Esophagus squamous epithelium (tissue), 5 donors: ENCODE measurements at regions of chr21 and their contacts with region 1.

Region 1: DNA sequence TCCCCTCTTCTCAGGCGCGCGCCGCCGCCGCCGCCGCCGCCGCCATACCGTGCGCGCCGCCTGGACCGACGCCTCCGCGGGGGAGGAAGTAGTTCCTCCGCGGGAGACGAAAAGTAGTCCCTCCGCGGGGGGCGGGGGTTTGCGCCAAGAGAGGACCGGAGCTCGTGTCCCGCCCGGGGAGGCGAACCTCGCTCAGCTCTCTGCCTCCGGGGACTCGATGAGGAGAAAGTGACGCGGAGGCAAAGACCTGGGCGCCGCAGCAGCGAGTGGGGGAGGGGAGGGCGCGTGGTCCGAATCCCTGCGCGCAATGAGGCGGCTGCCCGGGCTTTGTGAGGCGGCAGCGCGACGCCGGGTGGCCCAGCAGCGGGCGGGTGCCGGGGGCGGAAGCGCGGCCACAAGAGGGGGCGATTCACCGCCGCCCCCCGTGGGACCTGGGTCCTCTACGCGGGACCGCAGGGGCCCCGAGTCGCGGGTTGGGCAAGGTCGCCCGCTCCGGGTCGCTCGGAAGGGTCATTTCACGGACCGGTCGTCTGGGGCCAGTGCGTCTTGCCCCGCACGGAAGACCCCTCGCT is at the start of gene BRWD1:
- DNase-seq: peak; percentile 20
- H3K4me3 ChIP-seq: peak within 1 kb of the TSS; percentile 72 to 96 (median 85)
- H3K27ac ChIP-seq: peak within 1 kb of the TSS; percentile 98 to 99 (median 98)
- H3K4me1 ChIP-seq: peaks cover 0 to 44% (median 12%) of the 10 kb centered on the region in 3 donors
- H3K27me3 ChIP-seq: no peaks in the 10 kb centered on the region
- CTCF ChIP-seq: peak in 4 of 6 experiments; percentile 16 to 42 (median 22)
- POLR2A ChIP-seq: peak in 3 of 4 donors; percentile 6 to 76 (median 71)
- total RNA-seq, gene BRWD1: 22.1 to 57.2 (median 26.0) TPM

Region 2: GRCh38 chr21:39238275-39238674 is 75.4 kb before region 1 on chr21:
- intact Hi-C with region 1: no loop called
- DNase-seq: no peak
- H3K4me3 ChIP-seq: no peak overlapping the region
- H3K27ac ChIP-seq: no peak overlapping the region
- H3K4me1 ChIP-seq: no peaks in the 10 kb centered on the region
- H3K27me3 ChIP-seq: no peaks in the 10 kb centered on the region
- CTCF ChIP-seq: no peak
- POLR2A ChIP-seq: no peak

Region 3: DNA sequence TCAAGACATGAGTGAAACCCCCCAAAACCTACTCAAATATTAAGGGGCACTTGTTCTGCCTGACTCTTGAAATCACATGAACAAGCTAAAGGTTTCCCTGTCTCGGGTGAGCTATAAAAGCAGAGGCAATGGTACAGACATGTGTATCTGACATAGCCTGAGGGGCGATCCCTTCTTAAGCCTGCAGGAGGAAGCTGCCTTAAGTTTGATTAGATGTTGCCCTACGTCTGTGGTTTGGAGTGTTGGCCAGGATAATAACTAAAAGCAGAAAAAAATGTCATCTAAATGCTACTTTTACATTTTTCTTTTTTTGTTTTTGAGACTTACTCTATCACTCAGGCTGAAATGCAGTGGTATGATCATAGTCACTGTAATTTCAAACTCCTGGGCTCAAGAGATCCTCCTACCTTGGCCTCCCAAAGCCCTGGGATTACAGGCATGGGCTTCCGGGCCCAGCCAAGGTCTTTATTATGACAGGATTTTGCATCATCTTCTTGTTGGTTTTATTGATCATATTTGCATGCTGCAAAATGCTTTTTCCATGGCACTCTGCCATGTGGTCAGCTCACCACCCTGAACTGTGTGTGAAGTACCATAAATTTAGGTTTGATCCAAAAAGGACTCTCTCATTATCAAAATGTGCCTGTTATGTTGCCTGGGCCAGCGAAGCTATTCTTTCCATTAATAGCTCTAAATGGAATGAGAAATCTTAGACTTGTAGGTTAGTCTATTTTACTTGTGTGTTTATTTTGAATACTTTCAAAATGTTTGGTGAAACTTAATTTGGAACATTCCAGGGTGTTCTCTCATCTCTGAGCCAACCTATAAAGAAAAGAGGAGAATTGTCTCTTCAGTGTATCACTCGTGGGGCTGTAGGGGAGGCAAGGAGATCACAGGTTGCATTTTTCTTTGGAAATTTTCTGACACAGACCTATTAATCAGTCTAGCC is 50.2 kb after region 1 on chr21:
- intact Hi-C with region 1: no loop called
- DNase-seq: no peak
- H3K4me3 ChIP-seq: no peak overlapping the region
- H3K27ac ChIP-seq: no peak overlapping the region
- H3K4me1 ChIP-seq: no peaks in the 10 kb centered on the region
- H3K27me3 ChIP-seq: no peaks in the 10 kb centered on the region
- CTCF ChIP-seq: no peak
- POLR2A ChIP-seq: no peak

Region 4: DNA sequence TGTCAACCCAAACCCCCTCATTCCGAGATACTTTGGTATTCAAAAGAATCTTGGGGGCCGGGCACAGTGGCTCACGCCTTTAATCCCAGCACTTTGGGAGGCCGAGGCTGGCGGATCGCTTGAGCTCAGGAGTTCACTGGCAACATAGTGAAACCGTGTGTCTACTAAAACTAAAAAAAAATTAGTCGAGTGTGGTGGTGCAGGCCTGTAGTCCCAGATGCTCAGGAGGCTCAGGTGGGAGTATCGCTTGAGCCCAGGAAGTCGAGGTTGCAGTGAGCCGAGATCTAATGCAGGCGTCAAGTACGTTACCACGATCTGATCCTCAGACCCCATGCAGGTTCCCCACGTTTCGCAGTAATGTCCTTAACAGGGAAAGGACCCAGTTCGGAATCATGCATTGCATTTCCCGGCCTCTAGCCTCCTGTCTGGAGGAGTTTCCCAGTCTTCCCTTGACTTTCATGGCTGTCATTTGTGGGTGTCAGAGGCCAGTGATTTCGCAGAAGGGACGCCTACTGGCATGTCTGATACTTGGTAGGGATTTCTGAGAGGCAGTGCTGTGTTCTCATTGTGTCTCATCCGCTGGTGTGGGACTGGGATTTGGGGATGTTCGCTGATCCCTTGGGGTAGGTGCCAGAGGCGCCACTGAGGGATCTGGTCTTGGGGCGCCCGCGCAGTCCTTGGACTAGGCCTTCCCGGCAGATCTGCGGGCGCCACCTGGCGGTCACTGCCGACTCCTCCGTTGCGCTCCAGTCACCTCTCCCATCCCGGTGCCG is 74.6 kb after region 1 on chr21:
- intact Hi-C with region 1: loop called (anchors 10 kb)
- DNase-seq: no peak
- H3K4me3 ChIP-seq: peak overlapping the region; percentile 25 to 66 (median 53)
- H3K27ac ChIP-seq: peak overlapping the region; percentile 63 to 87 (median 78)
- H3K4me1 ChIP-seq: peaks cover 11 to 49% (median 15%) of the 10 kb centered on the region in 3 donors
- H3K27me3 ChIP-seq: no peaks in the 10 kb centered on the region
- CTCF ChIP-seq: peak; percentile 89 to 97 (median 92)
- POLR2A ChIP-seq: no peak